Activated T-helper 1 cell treated with anti-CD3 and anti-CD28 coated beads, Interleukin-12 subunit alpha, Interleukin-12 subunit beta, Interleukin-2, Interleukin-4 antibody, amounts not matched to agents 30 ng/mL and 10 ng/mL and 1 ng/mL, durations not matched to agents 14 hours and 24 hours and 36 hours (primary cell): ENCODE measurements at regions of chr3 and their contacts with region 1.

Region 1: DNA sequence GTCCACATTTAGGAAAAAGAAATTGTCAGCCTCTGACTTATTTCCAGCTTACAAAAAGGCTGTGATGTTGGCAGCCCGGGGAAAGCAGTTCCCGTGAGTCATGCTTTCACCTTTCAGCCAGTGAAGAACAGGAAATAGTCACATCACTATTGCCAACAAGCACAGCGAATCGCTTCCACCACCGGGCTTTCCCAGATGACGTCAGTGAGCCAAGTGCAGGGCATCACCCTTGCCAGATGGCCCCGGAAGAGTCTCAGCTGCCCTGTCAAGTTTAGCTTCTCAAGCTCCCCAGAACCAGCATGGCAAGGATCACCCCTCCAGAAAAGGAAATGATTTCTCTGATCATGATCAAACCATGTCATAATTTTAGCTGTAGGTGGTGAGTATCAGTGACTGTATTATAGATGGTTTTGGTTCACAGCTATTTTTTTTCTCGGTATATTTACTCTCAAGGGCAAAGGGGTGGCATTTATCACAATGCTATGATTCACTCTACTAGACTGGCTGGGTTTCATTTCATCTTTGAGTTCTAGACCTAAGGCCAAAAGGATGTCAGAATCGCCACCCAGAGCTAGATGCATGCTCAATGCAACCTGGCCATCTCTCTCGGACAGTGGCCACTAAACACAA is 32.9 kb downstream of the B3GNT5 start:
- DNase-seq: peak; percentile 90
- H3K4me3 Mint-ChIP-seq: peak overlapping the region; percentile 60
- H3K27ac Mint-ChIP-seq: peak overlapping the region; percentile 94
- H3K4me1 Mint-ChIP-seq: peaks cover 36% of the 10 kb centered on the region
- H3K27me3 Mint-ChIP-seq: no peaks in the 10 kb centered on the region

Region 2: GRCh38 chr3:182967218-182968204 is 318.4 kb before region 1 on chr3:
- intact Hi-C with region 1: loop called (anchors 10 kb)
- DNase-seq: no peak
- H3K4me3 Mint-ChIP-seq: peak overlapping the region; percentile 55
- H3K27ac Mint-ChIP-seq: peak overlapping the region; percentile 79
- H3K4me1 Mint-ChIP-seq: peaks cover 62% of the 10 kb centered on the region
- H3K27me3 Mint-ChIP-seq: no peaks in the 10 kb centered on the region

Region 3: GRCh38 chr3:183208260-183208659 is 77.7 kb before region 1 on chr3:
- intact Hi-C with region 1: loop called (anchors 2 kb)
- DNase-seq: no peak
- H3K4me3 Mint-ChIP-seq: no peak overlapping the region
- H3K27ac Mint-ChIP-seq: peak overlapping the region; percentile 69
- H3K4me1 Mint-ChIP-seq: peaks cover 22% of the 10 kb centered on the region
- H3K27me3 Mint-ChIP-seq: peaks cover 2% of the 10 kb centered on the region

Region 4: DNA sequence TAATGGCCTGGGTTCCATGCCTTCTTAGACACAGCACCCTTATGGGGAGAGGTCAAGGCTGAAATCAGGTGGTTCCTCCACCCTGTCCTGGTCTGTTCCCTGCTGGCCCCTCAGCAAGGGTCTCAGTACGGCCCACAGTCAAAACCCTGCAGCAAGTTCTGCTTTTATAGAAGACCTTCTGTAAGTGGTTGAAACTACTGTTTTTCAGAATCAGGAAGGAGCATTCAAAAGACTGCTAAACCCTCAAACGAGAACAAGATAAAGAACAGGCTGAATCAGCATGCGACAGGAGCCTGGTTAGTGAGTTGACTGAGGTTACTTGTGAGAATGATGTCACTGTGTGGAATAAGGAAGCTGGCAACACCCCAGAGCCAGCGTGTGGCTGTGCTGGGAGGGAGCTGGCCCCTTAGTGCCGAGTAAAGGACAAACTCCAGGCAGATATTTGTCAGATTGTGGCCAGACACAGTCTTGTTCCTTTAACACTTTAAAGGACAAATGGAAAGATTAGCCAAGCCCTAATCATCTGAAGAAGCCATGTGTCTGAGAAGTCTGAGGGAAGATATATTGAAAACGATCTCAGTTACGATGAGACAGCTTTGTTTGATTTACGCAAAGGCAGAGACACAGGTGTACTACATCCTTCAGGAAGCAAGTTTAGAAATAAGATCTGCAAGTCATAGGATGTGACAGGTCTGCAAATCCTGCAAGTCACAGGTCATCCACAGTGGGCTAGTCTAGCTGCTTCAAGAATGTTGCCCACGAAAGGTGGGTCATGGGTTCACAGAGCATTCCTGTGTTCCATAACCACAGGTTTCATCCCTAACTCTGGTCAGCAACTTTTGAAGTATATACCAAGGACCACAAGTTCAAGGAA is 21.1 kb after region 1 on chr3:
- intact Hi-C with region 1: loop called (anchors 1 kb)
- DNase-seq: peak; percentile 28
- H3K4me3 Mint-ChIP-seq: peak overlapping the region; percentile 53
- H3K27ac Mint-ChIP-seq: peak overlapping the region; percentile 72
- H3K4me1 Mint-ChIP-seq: peaks cover 39% of the 10 kb centered on the region
- H3K27me3 Mint-ChIP-seq: no peaks in the 10 kb centered on the region

Region 5: DNA sequence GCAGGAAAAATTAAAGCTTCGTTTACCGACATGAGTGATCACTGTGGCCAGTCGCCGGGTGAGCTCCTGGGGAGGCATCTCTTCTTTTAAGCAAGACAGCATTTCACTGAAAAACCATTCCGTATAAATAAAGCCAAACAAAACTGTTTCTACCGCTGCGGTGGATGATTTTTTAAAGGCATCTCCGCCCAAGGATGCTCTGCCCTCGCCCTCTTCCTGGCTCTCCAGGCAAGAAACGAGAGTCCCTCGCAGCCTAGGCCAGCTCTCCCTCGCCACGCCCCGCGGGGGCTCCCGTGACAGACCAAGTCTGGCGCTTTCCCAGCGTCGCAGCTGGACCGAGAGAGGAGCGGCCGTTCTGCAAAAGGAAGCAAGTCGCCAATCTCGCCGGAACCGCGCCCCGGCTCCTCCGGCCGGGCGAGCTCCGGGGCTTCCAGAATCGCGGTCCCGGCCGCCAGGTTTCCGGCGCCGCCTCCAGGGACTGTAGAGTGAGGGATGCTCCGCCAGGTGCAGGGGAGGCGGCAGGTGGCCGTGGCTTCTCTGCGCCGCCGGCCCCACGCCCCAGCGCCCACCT is 142.0 kb after region 1 on chr3:
- intact Hi-C with region 1: loop called (anchors 1 kb)
- DNase-seq: peak; percentile 14
- H3K4me3 Mint-ChIP-seq: peak overlapping the region; percentile 82
- H3K27ac Mint-ChIP-seq: peak overlapping the region; percentile 42
- H3K4me1 Mint-ChIP-seq: peaks cover 33% of the 10 kb centered on the region
- H3K27me3 Mint-ChIP-seq: peaks cover 9% of the 10 kb centered on the region

Region 6: GRCh38 chr3:183555541-183556081 is 269.7 kb after region 1 on chr3 and contains the start of gene KLHL6:
- intact Hi-C with region 1: loop called (anchors 1 kb)
- DNase-seq: peak; percentile 71
- H3K4me3 Mint-ChIP-seq: peak within 1 kb of the TSS; percentile 97
- H3K27ac Mint-ChIP-seq: peak within 1 kb of the TSS; percentile 100
- H3K4me1 Mint-ChIP-seq: peaks cover 57% of the 10 kb centered on the region
- H3K27me3 Mint-ChIP-seq: no peaks in the 10 kb centered on the region
- total RNA-seq, gene KLHL6: 38.6 and 40.6 TPM in 2 replicates